Activated CD4-positive, alpha-beta memory T cell treated with anti-CD3 and anti-CD28 coated beads for 36 hours (primary cell): ENCODE measurements at regions of chr20 and their contacts with region 1.

Region 1: DNA sequence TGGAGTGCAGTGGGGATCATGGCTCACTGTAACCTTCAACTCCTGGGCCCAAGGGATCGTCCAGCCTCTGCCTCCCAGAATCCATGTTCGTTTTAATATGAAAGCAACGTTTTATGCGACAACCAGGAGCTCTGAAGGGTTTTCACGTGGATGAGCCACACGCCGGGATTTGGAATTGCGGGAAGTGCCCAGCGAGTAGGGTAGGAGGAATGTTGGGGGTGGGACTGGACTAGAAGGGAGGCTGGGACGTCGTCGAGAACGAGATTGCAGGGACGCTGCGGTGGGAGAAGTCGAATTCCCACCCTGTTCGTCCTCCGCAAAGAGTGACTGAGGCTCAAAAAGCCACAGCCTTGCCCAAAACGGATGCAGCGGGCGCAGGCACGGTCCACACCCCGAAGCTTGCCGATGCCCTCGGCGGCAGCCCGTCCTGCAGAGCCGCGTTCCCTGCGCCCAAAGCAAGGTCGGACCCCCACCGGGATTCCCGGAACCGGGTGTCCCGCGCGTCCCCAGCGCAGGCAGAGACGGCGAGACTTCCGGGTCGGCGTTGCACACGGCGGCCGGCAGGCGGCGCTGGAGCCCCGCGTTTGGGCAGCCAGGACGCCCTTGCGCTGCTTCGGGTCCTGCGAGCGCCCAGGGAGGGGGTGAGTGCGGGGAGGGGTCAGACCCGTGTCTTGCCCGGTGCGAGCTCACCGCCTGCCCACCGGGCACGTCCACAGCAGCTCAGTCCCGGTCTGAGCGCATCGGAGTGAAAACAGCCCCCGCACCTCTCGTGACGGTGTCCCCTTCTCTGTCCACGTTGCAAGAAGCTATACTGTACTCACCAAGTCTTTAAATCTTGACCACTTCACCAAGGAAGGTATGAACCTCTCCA is 87.8 kb downstream of the DHX35 start:
- DNase-seq: peak; percentile 82
- H3K4me3 Mint-ChIP-seq: peak overlapping the region; percentile 80
- H3K27ac Mint-ChIP-seq: no peak overlapping the region
- H3K4me1 Mint-ChIP-seq: peaks cover 7% of the 10 kb centered on the region
- H3K27me3 Mint-ChIP-seq: peaks cover 1% of the 10 kb centered on the region

Region 2: GRCh38 chr20:38645980-38646858 is 403.7 kb before region 1 on chr20:
- CTCF ChIA-PET with region 1: interaction called, 6 read pairs
- POLR2A ChIA-PET with region 1: no interaction called
- intact Hi-C with region 1: loop called (anchors 1 kb)
- DNase-seq: peak; percentile 93
- H3K4me3 Mint-ChIP-seq: peak overlapping the region; percentile 43
- H3K27ac Mint-ChIP-seq: no peak overlapping the region
- H3K4me1 Mint-ChIP-seq: peaks cover 7% of the 10 kb centered on the region
- H3K27me3 Mint-ChIP-seq: peaks cover 23% of the 10 kb centered on the region

Region 3: GRCh38 chr20:38997622-38998021 is 52.3 kb before region 1 on chr20:
- CTCF ChIA-PET with region 1: interaction called, 20 read pairs
- POLR2A ChIA-PET with region 1: no interaction called
- intact Hi-C with region 1: no loop called
- DNase-seq: peak; percentile 83
- H3K4me3 Mint-ChIP-seq: no peak overlapping the region
- H3K27ac Mint-ChIP-seq: peak overlapping the region; percentile 9
- H3K4me1 Mint-ChIP-seq: peaks cover 22% of the 10 kb centered on the region
- H3K27me3 Mint-ChIP-seq: no peaks in the 10 kb centered on the region

Region 4: GRCh38 chr20:39004508-39004907 is 45.4 kb before region 1 on chr20:
- CTCF ChIA-PET with region 1: interaction called, 20 read pairs
- POLR2A ChIA-PET with region 1: no interaction called
- intact Hi-C with region 1: no loop called
- DNase-seq: peak; percentile 30
- H3K4me3 Mint-ChIP-seq: no peak overlapping the region
- H3K27ac Mint-ChIP-seq: no peak overlapping the region
- H3K4me1 Mint-ChIP-seq: peaks cover 20% of the 10 kb centered on the region
- H3K27me3 Mint-ChIP-seq: no peaks in the 10 kb centered on the region

Region 5: DNA sequence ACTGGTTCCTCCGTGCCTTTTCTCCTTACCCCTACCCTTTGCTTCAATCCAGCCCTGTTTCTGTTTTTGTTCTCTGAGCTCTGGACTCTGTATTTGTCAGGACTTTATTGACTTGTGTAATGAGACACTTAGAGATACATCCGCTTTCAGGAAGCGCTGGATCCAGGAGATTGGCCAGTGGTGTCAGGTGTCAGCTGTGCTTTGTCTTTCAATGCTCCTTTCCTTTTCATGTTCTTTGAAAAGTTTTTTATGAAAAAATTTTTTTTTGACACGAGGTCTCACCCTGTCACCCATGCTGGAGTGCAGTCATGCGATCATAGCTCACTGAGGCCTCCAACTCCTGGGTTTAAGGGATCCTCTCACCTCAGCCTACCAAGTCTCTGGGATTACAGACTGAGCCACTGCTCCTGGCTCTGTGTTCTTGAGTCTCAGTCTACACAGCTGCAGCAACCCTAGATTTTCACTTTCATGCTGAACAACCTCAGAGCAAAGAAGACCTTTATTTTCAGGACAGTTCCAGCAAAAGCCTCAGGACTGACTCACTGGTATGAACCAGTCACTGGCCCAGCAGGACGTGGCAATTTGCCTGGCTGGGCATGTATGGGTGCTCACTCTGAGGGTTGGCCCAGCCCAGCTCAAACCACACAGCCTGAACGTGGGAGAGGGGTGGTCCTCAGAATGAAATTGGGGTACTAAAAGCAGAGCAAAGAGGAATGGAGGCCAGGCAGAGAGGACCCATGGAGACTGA is 20.7 kb after region 1 on chr20:
- CTCF ChIA-PET with region 1: interaction called, 279 read pairs
- POLR2A ChIA-PET with region 1: no interaction called
- intact Hi-C with region 1: no loop called
- DNase-seq: no peak
- H3K4me3 Mint-ChIP-seq: no peak overlapping the region
- H3K27ac Mint-ChIP-seq: no peak overlapping the region
- H3K4me1 Mint-ChIP-seq: no peaks in the 10 kb centered on the region
- H3K27me3 Mint-ChIP-seq: peaks cover 24% of the 10 kb centered on the region

Region 6: DNA sequence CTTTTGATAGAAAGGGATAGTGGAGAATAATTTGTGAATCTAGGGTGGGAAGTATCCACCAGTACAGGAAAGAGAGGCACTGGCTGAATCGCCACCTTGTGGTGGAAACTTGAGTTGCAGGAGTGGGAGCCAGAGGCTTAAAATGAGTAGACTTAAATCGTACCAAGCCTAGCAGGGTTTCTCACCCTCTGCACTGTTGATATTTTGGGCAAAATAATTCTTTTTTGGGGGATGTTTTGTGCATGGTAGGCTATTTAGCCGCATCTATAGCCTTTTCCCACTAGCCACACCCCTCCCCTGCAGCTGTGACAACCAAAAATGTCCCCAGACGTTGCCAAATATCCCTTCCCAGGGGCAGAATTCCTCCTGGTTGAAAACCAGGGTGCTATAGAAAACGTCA is 31.3 kb after region 1 on chr20:
- CTCF ChIA-PET with region 1: interaction called, 279 read pairs
- POLR2A ChIA-PET with region 1: no interaction called
- intact Hi-C with region 1: loop called (anchors 1 kb)
- DNase-seq: peak; percentile 86
- H3K4me3 Mint-ChIP-seq: no peak overlapping the region
- H3K27ac Mint-ChIP-seq: no peak overlapping the region
- H3K4me1 Mint-ChIP-seq: no peaks in the 10 kb centered on the region
- H3K27me3 Mint-ChIP-seq: peaks cover 26% of the 10 kb centered on the region